ENCODE measurements at regions of chr11 and their contacts with region 1.

Region 1: GRCh38 chr11:105644839-105645573 is 35.1 kb downstream of the GRIA4 start:
- DNase-seq: no peak
- H3K4me3 ChIP-seq: no peak overlapping the region
- H3K4me3 Mint-ChIP-seq: no peak overlapping the region
- H3K27ac ChIP-seq: no peak overlapping the region
- H3K27ac Mint-ChIP-seq: no peak overlapping the region
- H3K4me1 ChIP-seq: no peaks in the 10 kb centered on the region
- H3K4me1 Mint-ChIP-seq: no peaks in the 10 kb centered on the region
- H3K27me3 ChIP-seq: no peaks in the 10 kb centered on the region
- H3K27me3 Mint-ChIP-seq: no peaks in the 10 kb centered on the region
- CTCF ChIP-seq: no peak

Region 2: GRCh38 chr11:104134751-104135479 is 1510.1 kb before region 1 on chr11:
- intact Hi-C with region 1: loop called in 1 of 2 experiments (anchors 10 kb)
- DNase-seq: no peak
- H3K4me3 ChIP-seq: no peak overlapping the region
- H3K4me3 Mint-ChIP-seq: no peak overlapping the region
- H3K27ac ChIP-seq: no peak overlapping the region
- H3K27ac Mint-ChIP-seq: no peak overlapping the region
- H3K4me1 ChIP-seq: no peaks in the 10 kb centered on the region
- H3K4me1 Mint-ChIP-seq: no peaks in the 10 kb centered on the region
- H3K27me3 ChIP-seq: no peaks in the 10 kb centered on the region
- H3K27me3 Mint-ChIP-seq: peaks cover 0 to 2% (median 0%) of the 10 kb centered on the region in 3 donors
- CTCF ChIP-seq: no peak